ENCODE measurements at regions of chr11 and their contacts with region 1.

Region 1: DNA sequence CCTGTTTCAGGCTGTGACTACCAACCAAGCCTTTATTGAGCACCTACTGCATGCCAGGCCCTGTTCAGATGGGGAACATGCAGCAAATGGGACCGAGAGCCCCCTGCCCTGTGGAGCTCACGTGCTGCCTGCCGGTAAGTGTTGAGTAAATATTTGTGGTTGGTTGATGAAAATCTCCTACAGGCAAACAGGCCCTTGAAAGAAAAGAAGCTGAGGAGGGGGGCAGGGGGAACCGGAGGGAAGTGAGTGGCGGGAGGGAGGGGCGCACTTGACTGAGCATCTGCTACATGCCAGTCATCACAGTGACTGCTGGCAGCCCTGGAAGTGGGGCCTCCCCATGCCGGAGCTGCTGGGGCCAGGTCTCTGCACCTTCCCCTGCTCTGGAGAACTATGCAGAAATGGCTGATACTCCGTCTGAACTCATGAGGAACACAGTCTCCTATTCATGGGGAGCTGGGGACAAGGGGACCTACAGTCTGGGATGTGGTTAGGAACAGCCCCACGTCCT is 34.2 kb downstream of the MACROD1 start:
- DNase-seq: peak in 1 of 2 experiments; percentile 18
- H3K4me3 ChIP-seq: no peak overlapping the region
- H3K4me3 Mint-ChIP-seq: no peak overlapping the region
- H3K27ac Mint-ChIP-seq: no peak overlapping the region
- H3K4me1 ChIP-seq: peaks cover 9% of the 10 kb centered on the region; the same call in 1 of the 2 replicates
- H3K4me1 Mint-ChIP-seq: peaks cover 7% of the 10 kb centered on the region
- H3K27me3 ChIP-seq: no peaks in the 10 kb centered on the region
- H3K27me3 Mint-ChIP-seq: no peaks in the 10 kb centered on the region
- CTCF ChIP-seq: no peak

Region 2: GRCh38 chr11:64094463-64095260 is 37.1 kb before region 1 on chr11:
- CTCF ChIA-PET with region 1: no interaction called
- POLR2A ChIA-PET with region 1: no interaction called
- intact Hi-C with region 1: loop called (anchors 5 kb)
- DNase-seq: no peak
- H3K4me3 ChIP-seq: no peak overlapping the region
- H3K4me3 Mint-ChIP-seq: no peak overlapping the region
- H3K27ac Mint-ChIP-seq: no peak overlapping the region
- H3K4me1 ChIP-seq: no peaks in the 10 kb centered on the region
- H3K4me1 Mint-ChIP-seq: no peaks in the 10 kb centered on the region
- H3K27me3 ChIP-seq: no peaks in the 10 kb centered on the region
- H3K27me3 Mint-ChIP-seq: no peaks in the 10 kb centered on the region
- CTCF ChIP-seq: no peak